CD14-positive monocyte (primary cell): ENCODE measurements at regions of chr5 and their contacts with region 1.

Region 1: DNA sequence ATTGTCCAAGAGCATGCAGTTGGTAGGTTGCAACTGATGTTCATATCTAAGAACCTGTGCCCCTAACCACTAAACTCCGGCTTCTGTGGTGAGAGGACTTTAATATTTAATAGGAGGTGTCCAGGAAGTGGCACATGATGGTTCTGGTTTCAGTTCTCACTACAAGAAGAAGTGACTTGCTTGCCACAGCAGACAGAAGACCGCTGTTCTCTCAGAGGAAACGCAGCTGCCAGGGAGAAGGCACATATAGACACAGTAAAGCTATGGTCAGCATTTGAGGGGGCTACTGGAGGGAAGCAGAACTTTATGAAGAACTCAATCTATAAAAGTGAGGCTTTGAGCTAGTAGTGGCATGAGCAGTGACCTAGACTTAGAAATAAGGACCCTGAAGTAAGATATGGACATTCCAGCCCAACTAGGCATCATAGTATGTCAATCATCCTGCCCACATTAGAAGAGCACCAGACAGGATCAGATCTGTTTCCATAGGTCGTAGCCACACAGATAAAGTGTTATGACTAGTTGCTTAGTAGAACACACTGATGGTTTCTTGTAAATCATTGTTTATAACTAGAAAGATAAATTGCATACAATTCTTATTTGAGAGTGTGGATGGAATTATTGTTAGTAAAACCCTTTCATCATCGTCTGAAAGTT is 36.4 kb upstream of the DAB2 start:
- DNase-seq: peak; percentile 57 to 77 (median 68)
- H3K4me3 ChIP-seq: peak overlapping the region in 1 of 3 experiments; percentile 35
- H3K4me3 Mint-ChIP-seq: peak overlapping the region; percentile 31 to 75
- H3K27ac ChIP-seq: peak overlapping the region in 1 of 2 donors; percentile 65
- H3K27ac Mint-ChIP-seq: peak overlapping the region; percentile 64 to 91 (median 85)
- H3K4me1 ChIP-seq: peaks cover 35 to 40% of the 10 kb centered on the region in 2 donors
- H3K4me1 Mint-ChIP-seq: peaks cover 37% of the 10 kb centered on the region
- H3K27me3 ChIP-seq: no peaks in the 10 kb centered on the region
- H3K27me3 Mint-ChIP-seq: peaks cover 0 to 5% (median 2%) of the 10 kb centered on the region in 3 donors
- CTCF ChIP-seq: no peak

Region 2: GRCh38 chr5:39314591-39314990 is 146.6 kb before region 1 on chr5:
- intact Hi-C with region 1: no loop called
- DNase-seq: no peak
- H3K4me3 ChIP-seq: no peak overlapping the region
- H3K4me3 Mint-ChIP-seq: no peak overlapping the region
- H3K27ac ChIP-seq: no peak overlapping the region
- H3K27ac Mint-ChIP-seq: no peak overlapping the region
- H3K4me1 ChIP-seq: no peaks in the 10 kb centered on the region
- H3K4me1 Mint-ChIP-seq: no peaks in the 10 kb centered on the region
- H3K27me3 ChIP-seq: no peaks in the 10 kb centered on the region
- H3K27me3 Mint-ChIP-seq: peaks cover 0 to 2% (median 0%) of the 10 kb centered on the region in 3 donors
- CTCF ChIP-seq: no peak

Region 3: DNA sequence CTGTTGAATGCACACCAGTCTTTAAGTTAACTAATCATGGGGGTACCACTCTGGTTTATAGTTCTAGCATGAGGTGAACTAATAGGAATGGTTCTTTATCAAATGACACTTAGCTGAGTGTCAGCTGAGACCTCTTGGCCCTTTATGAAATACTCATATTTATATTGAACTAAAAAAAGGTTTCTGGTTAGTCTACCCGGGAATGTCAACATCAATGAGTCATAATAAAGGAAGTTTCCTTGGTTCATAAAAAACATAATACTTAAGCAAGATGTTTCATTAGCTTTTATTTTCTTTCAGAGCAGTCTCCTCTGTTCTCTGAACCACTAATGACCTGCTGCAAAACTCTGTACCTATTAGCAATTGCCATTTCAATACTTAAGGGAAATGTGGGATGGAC is 50.1 kb before region 1 on chr5:
- intact Hi-C with region 1: loop called in 1 of 2 experiments (anchors 10 kb)
- DNase-seq: peak; percentile 55 to 83 (median 75)
- H3K4me3 ChIP-seq: peak overlapping the region in 1 of 3 experiments; percentile 31
- H3K4me3 Mint-ChIP-seq: peak overlapping the region in 1 of 2 donors; percentile 46
- H3K27ac ChIP-seq: peak overlapping the region in 1 of 2 donors; percentile 59
- H3K27ac Mint-ChIP-seq: peak overlapping the region; percentile 49 to 82 (median 66)
- H3K4me1 ChIP-seq: peaks cover 25 to 29% of the 10 kb centered on the region in 2 donors
- H3K4me1 Mint-ChIP-seq: peaks cover 27% of the 10 kb centered on the region
- H3K27me3 ChIP-seq: no peaks in the 10 kb centered on the region
- H3K27me3 Mint-ChIP-seq: peaks cover 0 to 2% (median 0%) of the 10 kb centered on the region in 3 donors
- CTCF ChIP-seq: no peak